Vagina (tissue), 2 donors: ENCODE measurements at regions of chr9 and their contacts with region 1.

Region 1: DNA sequence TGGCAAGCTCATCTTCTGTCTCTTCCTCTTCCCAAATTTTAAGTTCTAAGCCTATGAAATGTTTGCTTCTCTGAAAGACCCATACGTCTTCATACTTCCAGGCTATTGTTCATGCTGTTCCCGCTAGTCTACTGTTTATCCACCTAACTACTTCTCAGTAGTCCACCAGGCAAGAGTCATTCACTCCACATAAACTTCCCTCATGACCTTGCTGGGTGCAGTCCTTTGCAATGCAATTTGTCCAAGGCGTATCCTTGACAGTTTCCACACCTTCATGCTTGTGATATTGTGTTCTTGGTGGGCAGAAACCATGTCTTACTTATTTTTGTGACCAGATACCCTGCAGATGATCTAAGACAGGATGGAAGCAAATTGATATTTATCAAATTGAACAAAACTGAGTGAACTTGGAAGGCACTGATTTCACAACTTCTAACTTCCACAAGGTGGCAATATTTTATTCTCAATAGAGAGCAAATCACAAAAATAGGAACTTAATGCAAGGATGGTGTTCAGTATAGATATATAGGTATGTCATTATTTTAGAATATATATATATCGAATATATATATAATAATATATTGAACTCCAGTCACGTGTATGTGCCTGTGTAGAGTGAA is 30.3 kb downstream of the TYRP1 start:
- DNase-seq: no peak
- H3K4me3 ChIP-seq: no peak overlapping the region
- H3K27ac ChIP-seq: no peak overlapping the region
- H3K4me1 ChIP-seq: no peaks in the 10 kb centered on the region
- H3K27me3 ChIP-seq: no peaks in the 10 kb centered on the region
- CTCF ChIP-seq: peak; percentile 11 to 29 (median 29)
- POLR2A ChIP-seq: no peak

Region 2: GRCh38 chr9:12859704-12860251 is 136.3 kb after region 1 on chr9:
- intact Hi-C with region 1: no loop called
- DNase-seq: no peak
- H3K4me3 ChIP-seq: no peak overlapping the region
- H3K27ac ChIP-seq: no peak overlapping the region
- H3K4me1 ChIP-seq: peaks cover 7% of the 10 kb centered on the region
- H3K27me3 ChIP-seq: no peaks in the 10 kb centered on the region
- CTCF ChIP-seq: no peak
- POLR2A ChIP-seq: no peak

Region 3: DNA sequence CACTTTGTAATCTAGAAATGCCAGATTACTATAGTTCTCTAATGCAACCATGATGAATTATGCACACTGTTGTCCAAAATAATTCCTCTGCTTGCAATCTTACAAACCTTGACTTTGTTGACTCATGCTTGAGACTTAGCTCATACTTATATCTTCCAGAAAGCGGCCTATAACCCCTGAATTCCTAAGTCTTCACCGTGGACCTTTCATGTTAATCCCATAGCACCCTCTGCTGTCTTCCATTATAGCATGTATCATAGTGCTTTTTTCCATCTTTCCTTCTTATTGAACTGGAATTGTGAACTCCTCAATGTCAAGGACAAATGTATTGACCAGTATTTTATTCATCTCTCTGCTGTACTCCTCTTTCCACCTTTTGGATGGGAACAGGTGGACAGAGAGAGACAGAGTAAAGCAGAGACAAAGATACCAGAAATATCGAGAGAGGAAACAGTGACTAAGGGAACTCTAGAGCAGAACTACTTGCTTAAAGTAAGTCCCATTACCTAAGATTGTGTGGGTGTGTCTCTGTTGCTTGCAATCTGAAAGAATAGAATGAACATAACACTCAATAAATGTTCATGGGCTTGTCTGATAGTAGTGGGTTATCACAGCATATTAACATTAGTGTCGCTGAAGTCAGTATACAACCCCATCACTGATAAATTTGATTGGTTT is 161.4 kb after region 1 on chr9:
- intact Hi-C with region 1: loop called (anchors 2 kb)
- DNase-seq: no peak
- H3K4me3 ChIP-seq: no peak overlapping the region
- H3K27ac ChIP-seq: no peak overlapping the region
- H3K4me1 ChIP-seq: peaks cover 13% of the 10 kb centered on the region
- H3K27me3 ChIP-seq: no peaks in the 10 kb centered on the region
- CTCF ChIP-seq: peak in 1 of 3 experiments; percentile 48
- POLR2A ChIP-seq: no peak